SK-N-SH (cell line): ENCODE measurements at regions of chr1 and their contacts with region 1.

Region 1: GRCh38 chr1:205061665-205062069 is 18.7 kb downstream of the CNTN2 start:
- DNase-seq: peak; percentile 91
- H3K4me3 ChIP-seq: no peak overlapping the region; a peak in 1 of 4 replicates
- H3K27ac ChIP-seq: no peak overlapping the region
- H3K4me1 ChIP-seq: peaks cover 0 to 5% of the 10 kb centered on the region in 2 experiments; a peak in 1 of 4 replicates
- H3K27me3 ChIP-seq: no peaks in the 10 kb centered on the region
- CTCF ChIP-seq: peak; percentile 96
- EP300 ChIP-seq: no peak
- RAD21 ChIP-seq: peak; percentile 92

Region 2: DNA sequence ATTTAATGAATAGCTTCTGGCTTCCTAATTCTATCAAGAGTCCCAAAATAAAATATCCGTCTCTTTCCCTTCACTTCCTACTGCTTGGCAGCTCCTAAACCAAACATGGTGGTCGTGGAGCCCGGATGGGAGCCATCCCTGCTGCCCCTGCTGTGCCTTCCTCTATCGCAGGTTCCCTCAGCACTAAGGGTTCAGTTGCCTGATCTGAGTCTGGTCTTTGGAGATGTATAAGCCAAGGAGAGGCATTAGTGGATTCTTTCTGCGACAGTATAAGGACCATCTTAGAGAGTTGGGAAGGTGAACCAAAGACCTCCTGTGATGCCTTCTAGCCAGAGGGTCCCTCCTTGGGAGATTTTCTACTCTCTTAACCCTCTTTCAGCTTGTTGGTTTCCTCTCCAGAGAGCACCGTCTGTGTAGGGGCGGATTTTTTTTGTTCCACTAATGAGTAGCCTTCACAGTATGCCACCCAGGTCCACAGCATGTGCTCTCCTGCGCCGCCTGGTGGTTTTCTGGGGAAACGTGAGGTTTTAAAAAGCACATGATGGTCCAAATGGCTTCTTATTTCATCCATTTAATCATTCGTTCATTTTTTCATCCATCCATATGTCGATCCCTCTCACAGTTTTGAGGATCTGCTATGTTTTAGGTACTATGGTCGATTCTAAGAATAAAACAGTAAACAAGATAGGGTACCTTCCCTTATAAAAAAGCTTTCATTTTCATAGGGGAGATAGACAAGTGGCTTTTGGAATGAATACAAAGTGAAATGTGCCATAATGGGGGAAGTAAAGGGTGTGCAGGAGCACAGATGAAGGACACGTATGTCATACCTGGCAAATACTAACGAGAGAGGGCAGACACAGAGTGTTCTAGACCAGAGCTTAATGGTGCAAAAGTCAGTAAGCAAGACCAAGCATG is 120.0 kb before region 1 on chr1:
- CTCF ChIA-PET with region 1: interaction called, 15 read pairs
- POLR2A ChIA-PET with region 1: no interaction called
- DNase-seq: peak; percentile 77
- H3K4me3 ChIP-seq: no peak overlapping the region; a peak in 1 of 4 replicates
- H3K27ac ChIP-seq: no peak overlapping the region
- H3K4me1 ChIP-seq: no peaks in the 10 kb centered on the region
- H3K27me3 ChIP-seq: no peaks in the 10 kb centered on the region
- CTCF ChIP-seq: peak; percentile 84
- EP300 ChIP-seq: no peak
- RAD21 ChIP-seq: peak; percentile 77

Region 3: DNA sequence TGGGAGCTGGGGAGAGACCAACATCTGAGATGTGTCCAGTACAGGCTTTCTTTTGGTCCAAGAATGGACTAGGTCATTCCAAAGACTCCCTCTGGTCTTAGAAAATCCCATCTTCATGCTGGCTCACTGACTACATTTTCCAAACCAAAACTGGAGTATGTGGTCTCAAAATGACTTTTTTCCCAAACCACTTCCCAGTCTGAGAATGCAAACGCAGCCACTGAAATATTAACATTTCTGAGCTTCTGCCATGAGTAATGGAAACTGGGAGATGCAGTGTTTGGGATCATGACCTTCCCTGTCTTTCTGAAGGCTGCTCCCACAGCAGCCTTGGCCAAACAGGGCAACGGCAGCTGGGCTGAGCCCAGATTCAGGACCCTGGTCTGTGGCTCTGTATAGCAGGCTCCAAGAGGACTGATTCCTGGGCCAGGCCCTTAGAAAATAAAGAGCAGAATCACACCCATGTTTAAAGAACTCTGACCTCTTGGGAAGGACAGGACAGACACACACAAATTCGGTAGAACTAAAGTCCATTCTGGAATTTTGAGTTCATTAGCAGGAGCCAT is 80.7 kb before region 1 on chr1:
- CTCF ChIA-PET with region 1: interaction called, 756 read pairs
- POLR2A ChIA-PET with region 1: interaction called, 3 read pairs
- DNase-seq: no peak
- H3K4me3 ChIP-seq: no peak overlapping the region
- H3K27ac ChIP-seq: no peak overlapping the region
- H3K4me1 ChIP-seq: no peaks in the 10 kb centered on the region
- H3K27me3 ChIP-seq: no peaks in the 10 kb centered on the region
- CTCF ChIP-seq: no peak
- EP300 ChIP-seq: no peak
- RAD21 ChIP-seq: no peak

Region 4: GRCh38 chr1:205032508-205032907 is 29.2 kb before region 1 on chr1:
- CTCF ChIA-PET with region 1: interaction called, 92 read pairs
- POLR2A ChIA-PET with region 1: no interaction called
- DNase-seq: no peak
- H3K4me3 ChIP-seq: no peak overlapping the region
- H3K27ac ChIP-seq: no peak overlapping the region
- H3K4me1 ChIP-seq: peaks cover 0 to 8% of the 10 kb centered on the region in 2 experiments; a peak in 1 of 4 replicates
- H3K27me3 ChIP-seq: peaks cover 22% of the 10 kb centered on the region
- CTCF ChIP-seq: no peak
- EP300 ChIP-seq: no peak
- RAD21 ChIP-seq: no peak

Region 5: GRCh38 chr1:205071801-205072200 is 10.1 kb after region 1 on chr1:
- CTCF ChIA-PET with region 1: interaction called, 58 read pairs
- POLR2A ChIA-PET with region 1: no interaction called
- DNase-seq: no peak
- H3K4me3 ChIP-seq: no peak overlapping the region
- H3K27ac ChIP-seq: no peak overlapping the region
- H3K4me1 ChIP-seq: no peaks in the 10 kb centered on the region; a peak in 1 of 4 replicates
- H3K27me3 ChIP-seq: no peaks in the 10 kb centered on the region
- CTCF ChIP-seq: no peak
- EP300 ChIP-seq: no peak
- RAD21 ChIP-seq: no peak

Region 6: GRCh38 chr1:205098242-205098641 is 36.6 kb after region 1 on chr1:
- CTCF ChIA-PET with region 1: interaction called, 14 read pairs
- POLR2A ChIA-PET with region 1: no interaction called
- DNase-seq: no peak
- H3K4me3 ChIP-seq: no peak overlapping the region
- H3K27ac ChIP-seq: no peak overlapping the region
- H3K4me1 ChIP-seq: no peaks in the 10 kb centered on the region
- H3K27me3 ChIP-seq: no peaks in the 10 kb centered on the region
- CTCF ChIP-seq: no peak
- EP300 ChIP-seq: no peak
- RAD21 ChIP-seq: no peak

Region 7: GRCh38 chr1:205172729-205173366 is 111.2 kb after region 1 on chr1:
- CTCF ChIA-PET with region 1: no interaction called
- POLR2A ChIA-PET with region 1: no interaction called
- DNase-seq: no peak
- H3K4me3 ChIP-seq: no peak overlapping the region
- H3K27ac ChIP-seq: peak overlapping the region in 1 of 2 experiments; percentile 100; a peak in 2 of 4 replicates
- H3K4me1 ChIP-seq: peaks cover 0 to 10% of the 10 kb centered on the region in 2 experiments; a peak in 3 of 4 replicates
- H3K27me3 ChIP-seq: no peaks in the 10 kb centered on the region
- CTCF ChIP-seq: no peak
- EP300 ChIP-seq: peak in 1 of 2 experiments; percentile 64; a peak in 2 of 4 replicates
- RAD21 ChIP-seq: no peak

Region 8: DNA sequence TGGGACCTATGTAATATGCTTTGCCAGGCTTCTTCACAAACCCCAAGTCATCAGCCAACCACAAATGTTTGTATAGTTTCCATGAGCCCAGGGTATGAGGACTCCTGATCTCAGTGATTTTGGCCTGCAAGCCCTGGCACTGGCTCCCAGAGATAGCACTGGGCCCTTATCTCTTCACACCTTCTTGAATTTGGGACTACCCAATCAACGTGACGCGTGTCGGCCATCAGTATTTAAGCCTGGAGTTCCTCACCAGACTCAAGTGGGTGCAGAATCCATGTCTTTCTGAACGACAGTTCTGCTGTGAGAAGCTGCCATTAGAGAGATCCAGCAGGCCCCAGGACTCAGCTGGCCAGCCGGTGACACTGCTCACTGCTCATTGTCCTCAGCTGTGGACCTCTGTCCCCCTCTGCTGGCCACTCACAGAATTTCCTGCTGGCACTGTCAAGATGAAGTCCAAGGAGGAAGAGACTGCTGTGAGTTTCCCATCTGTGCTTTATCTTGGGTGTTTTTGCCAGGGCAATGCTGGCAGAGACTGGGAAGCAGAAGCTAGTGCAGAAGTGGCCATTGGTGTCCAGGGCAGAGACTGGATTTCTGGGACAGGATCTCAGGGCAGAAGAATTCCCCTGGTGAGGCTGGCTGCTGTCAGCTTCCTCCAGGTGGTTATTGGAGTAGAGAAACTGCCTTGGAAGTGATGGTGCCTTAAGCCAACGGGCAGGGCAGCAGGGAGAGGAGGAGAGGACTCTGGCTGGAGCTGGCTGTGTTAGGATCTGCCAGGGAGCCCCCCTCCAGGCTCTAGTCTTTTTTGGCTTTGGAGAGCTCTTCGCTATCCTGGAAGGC is 194.5 kb after region 1 on chr1:
- CTCF ChIA-PET with region 1: interaction called, 93 read pairs
- POLR2A ChIA-PET with region 1: no interaction called
- DNase-seq: peak; percentile 90
- H3K4me3 ChIP-seq: no peak overlapping the region; a peak in 1 of 4 replicates
- H3K27ac ChIP-seq: no peak overlapping the region
- H3K4me1 ChIP-seq: peaks cover 14 to 19% of the 10 kb centered on the region in 2 experiments; a peak in 3 of 4 replicates
- H3K27me3 ChIP-seq: no peaks in the 10 kb centered on the region
- CTCF ChIP-seq: peak; percentile 94
- EP300 ChIP-seq: no peak
- RAD21 ChIP-seq: peak; percentile 100

Region 9: DNA sequence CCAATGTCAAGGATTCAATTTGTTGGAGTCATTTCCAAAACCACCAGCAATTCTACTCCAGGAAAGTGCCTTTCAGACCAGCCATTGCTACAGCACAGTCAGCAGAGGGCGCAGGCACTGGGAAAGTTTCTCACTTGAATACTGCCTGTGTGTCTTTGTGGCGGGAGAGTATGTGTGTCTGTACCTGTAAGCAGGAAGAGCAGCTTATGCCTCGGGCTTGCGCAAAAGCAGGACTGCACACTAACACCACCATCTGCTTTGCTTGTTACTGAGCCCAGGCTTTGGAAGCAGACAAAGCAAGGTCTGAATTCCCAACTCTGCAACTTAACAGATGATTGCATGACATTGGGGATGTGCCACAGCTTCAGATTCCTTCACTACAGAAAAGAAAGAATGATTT is 969.0 kb after region 1 on chr1:
- CTCF ChIA-PET with region 1: no interaction called
- POLR2A ChIA-PET with region 1: no interaction called
- DNase-seq: peak; percentile 59
- H3K4me3 ChIP-seq: peak overlapping the region in 1 of 2 experiments; percentile 8; a peak in 1 of 4 replicates
- H3K27ac ChIP-seq: no peak overlapping the region
- H3K4me1 ChIP-seq: peaks cover 0 to 2% of the 10 kb centered on the region in 2 experiments; a peak in 1 of 4 replicates
- H3K27me3 ChIP-seq: peaks cover 16% of the 10 kb centered on the region; the same call in 1 of the 2 replicates
- CTCF ChIP-seq: peak; percentile 82
- EP300 ChIP-seq: no peak
- RAD21 ChIP-seq: peak; percentile 82